ENCODE measurements at regions of chr15 and their contacts with region 1.

Region 1: DNA sequence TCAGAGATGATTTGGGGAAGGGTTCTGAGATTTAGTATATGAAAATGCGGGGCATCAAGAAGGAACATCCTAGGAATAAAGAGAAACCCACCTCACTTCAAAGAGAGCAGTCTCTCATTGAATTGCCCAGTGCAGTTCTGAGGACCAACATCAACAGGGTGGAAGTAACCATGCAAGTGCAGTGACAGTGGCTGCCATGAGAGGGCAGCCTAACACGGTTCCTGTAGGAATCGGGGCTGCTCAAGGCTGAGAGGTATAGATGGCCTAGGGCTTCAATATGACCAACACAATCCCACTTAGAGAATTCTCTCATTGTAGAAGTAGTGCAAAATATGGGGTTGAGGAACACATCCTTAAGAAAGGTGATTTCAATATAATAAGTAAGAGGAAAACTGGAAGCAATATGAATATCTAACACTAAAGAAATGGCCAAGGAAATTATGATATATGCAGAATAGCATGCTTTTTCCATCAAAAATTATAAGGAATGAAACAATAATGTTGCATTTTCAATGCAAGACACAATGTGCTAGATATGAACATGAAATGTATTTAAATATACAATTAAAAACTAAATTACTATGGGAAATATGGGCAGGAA is 51.1 kb upstream of the ARRDC4 start:
- DNase-seq: peak; percentile 41 to 77
- ATAC-seq: peak; percentile 97

Region 2: GRCh38 chr15:97425596-97425995 is 483.8 kb before region 1 on chr15:
- intact Hi-C with region 1: no loop called
- DNase-seq: no peak
- ATAC-seq: no peak

Region 3: DNA sequence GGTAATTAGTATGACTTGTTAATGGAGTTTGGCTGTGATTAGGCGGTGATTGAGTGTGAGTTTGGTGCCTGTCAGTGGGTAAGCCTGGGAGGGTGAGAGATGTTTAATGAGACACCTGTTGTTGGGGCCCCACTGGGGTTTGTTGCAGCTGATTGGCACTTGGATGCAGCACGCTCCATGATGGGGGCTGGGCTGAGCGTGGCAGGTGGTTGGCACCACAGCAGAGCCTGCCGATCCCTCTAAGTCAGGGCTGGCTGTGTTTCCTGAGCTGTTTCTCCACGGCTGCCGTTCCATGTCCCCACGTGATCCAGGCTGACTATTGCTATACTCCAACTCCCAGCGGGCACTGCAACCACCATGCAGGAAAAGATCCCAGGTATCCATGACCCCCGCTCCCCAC is 42.4 kb before region 1 on chr15:
- intact Hi-C with region 1: no loop called
- DNase-seq: no peak
- ATAC-seq: no peak

Region 4: DNA sequence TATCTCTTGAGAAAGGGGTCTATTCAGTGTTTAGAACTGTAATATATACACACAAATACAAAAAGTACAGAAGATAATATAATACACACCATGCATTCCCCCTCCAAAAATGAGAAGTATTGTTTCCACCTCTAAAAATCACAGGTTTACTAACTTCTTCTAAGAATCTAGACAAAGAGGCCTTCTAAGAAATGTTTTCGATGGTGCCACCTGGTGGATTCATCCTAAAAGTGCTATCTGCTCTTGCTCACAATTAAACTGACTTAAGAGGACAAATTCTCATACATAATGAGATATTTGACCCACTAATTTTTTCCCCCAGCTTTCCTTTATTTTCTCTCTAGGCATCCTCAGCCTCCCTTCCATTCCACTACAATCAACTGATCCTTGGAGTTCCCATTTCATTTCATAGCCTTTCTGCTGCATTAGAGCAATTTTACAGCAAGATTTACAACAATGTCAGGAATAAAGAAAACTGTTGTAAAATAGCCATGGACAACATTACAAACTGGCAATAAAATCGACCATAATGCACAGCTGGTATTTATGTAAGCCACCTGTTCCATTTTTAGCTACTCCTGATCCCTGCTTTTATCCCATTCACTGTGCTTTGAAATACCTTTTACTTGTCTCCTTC is 175.7 kb after region 1 on chr15:
- intact Hi-C with region 1: loop called (anchors 2 to 5 kb)
- DNase-seq: peak; percentile 29 to 34
- ATAC-seq: peak; percentile 54

Region 5: DNA sequence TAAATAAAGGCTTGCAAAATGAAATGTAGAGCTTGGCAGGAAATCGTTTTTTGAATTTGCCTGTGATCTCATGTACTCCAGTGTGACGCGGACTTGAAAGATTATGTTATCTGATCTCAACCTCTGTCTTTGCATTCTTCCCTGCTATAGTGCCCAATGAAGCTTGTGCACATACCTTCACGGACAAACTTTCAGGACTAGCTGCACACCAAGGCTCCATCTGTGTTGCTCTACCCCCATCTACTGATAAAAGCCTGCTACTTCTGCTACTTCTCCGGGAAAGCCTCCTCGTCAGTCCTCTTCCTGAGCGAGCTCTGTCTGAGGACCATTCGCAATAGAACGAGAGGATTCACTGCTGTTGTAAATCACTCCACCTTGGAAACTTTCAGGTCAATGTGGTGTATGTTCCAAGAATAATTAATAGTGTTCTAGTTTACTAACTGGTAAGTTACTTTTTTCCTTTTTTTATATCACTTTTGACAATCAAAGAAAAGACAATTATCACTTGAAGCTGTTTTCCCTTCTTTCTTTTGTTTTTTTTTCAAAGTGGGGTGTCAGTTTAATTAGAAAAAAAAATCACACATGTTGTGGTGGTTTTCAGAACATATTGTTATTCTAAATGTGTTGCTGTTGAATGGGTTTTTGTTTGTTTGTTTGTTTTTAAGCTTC is 268.7 kb after region 1 on chr15:
- intact Hi-C with region 1: loop called in 1 of 2 experiments (anchors 5 kb)
- DNase-seq: peak; percentile 18 to 25
- ATAC-seq: peak; percentile 96

Region 6: DNA sequence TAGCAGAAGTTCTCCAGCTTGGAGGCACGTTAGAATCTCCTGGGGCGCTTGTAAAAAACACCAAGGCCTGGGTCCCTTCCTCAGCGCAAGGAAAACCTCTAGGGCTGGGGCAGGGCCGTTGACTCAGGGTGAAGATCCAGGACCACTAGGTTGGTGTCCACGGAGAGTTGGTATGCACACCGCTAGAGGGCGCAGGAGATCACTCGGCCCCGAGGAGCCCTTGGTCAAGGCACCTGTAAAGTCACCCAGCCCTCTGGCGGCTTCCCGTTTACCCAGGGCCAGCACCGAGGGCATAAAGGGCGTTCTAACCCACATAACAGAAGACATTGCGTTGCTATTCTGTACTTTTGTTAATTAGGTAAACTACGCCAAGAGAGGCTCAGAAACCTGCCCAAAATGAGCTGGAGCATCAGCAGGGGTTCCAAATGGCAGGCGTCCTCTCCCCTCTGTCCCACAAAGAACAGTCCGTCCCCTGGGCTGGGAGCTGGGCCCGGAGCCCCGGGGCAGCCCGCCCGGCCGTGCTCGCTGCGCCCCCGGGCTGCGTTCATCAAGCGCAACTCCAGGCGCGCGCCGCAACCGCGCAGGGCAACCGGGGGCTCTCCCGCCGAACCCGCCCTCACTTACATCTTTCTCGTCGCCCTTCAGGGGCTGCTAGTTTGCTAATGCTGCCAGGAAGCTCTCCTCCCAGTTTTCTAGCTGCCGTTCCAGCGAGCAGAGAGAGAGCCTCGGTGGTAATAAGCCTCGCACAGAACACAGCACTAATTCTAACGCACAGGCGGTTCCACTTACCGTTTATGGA is 383.2 kb after region 1 on chr15:
- intact Hi-C with region 1: loop called (anchors 10 kb)
- DNase-seq: peak in 1 of 2 donors; percentile 53
- ATAC-seq: peak; percentile 62